Activated CD8-positive, alpha-beta T cell treated with anti-CD3 and anti-CD28 coated beads for 36 hours (primary cell): ENCODE measurements at regions of chr5 and their contacts with region 1.

Region 1: GRCh38 chr5:14644623-14645237 is 19.8 kb upstream of the OTULIN start:
- DNase-seq: no peak
- ATAC-seq: no peak
- H3K4me3 Mint-ChIP-seq: no peak overlapping the region
- H3K27ac Mint-ChIP-seq: no peak overlapping the region
- H3K4me1 Mint-ChIP-seq: no peaks in the 10 kb centered on the region
- H3K27me3 Mint-ChIP-seq: peaks cover 14% of the 10 kb centered on the region
- CTCF ChIP-seq: no peak

Region 2: DNA sequence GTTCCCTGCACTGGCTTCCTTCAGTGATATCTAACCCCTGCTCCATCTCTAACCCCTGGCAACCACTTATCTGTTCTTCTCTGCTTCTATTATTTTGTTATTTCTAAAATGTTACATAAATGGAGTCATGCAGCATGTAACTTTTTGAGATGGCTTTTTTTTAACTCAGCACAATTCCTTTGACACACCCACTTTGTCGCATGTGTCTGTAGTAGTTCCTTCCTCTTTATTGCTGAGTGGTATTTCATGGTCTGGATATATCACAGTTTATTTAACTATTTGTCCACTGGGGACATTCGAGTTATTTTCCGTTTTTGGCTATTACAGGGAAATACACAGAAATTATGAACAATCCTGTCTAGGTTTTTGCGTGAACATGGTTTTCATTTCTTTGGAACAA is 301.4 kb before region 1 on chr5:
- CTCF ChIA-PET with region 1: interaction called, 17 read pairs
- POLR2A ChIA-PET with region 1: no interaction called
- intact Hi-C with region 1: no loop called
- DNase-seq: no peak
- ATAC-seq: no peak
- H3K4me3 Mint-ChIP-seq: no peak overlapping the region
- H3K27ac Mint-ChIP-seq: no peak overlapping the region
- H3K4me1 Mint-ChIP-seq: peaks cover 3% of the 10 kb centered on the region
- H3K27me3 Mint-ChIP-seq: peaks cover 2% of the 10 kb centered on the region
- CTCF ChIP-seq: no peak

Region 3: GRCh38 chr5:14357851-14358250 is 286.9 kb before region 1 on chr5:
- CTCF ChIA-PET with region 1: interaction called, 172 read pairs
- POLR2A ChIA-PET with region 1: interaction called, 3 read pairs
- intact Hi-C with region 1: no loop called
- DNase-seq: no peak
- ATAC-seq: no peak
- H3K4me3 Mint-ChIP-seq: no peak overlapping the region
- H3K27ac Mint-ChIP-seq: no peak overlapping the region
- H3K4me1 Mint-ChIP-seq: no peaks in the 10 kb centered on the region
- H3K27me3 Mint-ChIP-seq: peaks cover 1% of the 10 kb centered on the region
- CTCF ChIP-seq: no peak

Region 4: GRCh38 chr5:14383923-14384322 is 260.8 kb before region 1 on chr5:
- CTCF ChIA-PET with region 1: interaction called, 22 read pairs
- POLR2A ChIA-PET with region 1: no interaction called
- intact Hi-C with region 1: no loop called
- DNase-seq: no peak
- ATAC-seq: no peak
- H3K4me3 Mint-ChIP-seq: no peak overlapping the region
- H3K27ac Mint-ChIP-seq: no peak overlapping the region
- H3K4me1 Mint-ChIP-seq: peaks cover 9% of the 10 kb centered on the region
- H3K27me3 Mint-ChIP-seq: no peaks in the 10 kb centered on the region
- CTCF ChIP-seq: no peak

Region 5: GRCh38 chr5:14415024-14415697 is 229.6 kb before region 1 on chr5:
- CTCF ChIA-PET with region 1: interaction called, 27 read pairs
- POLR2A ChIA-PET with region 1: no interaction called
- intact Hi-C with region 1: loop called (anchors 5 kb)
- DNase-seq: peak; percentile 85
- ATAC-seq: peak; percentile 58
- H3K4me3 Mint-ChIP-seq: peak overlapping the region; percentile 67
- H3K27ac Mint-ChIP-seq: peak overlapping the region; percentile 98
- H3K4me1 Mint-ChIP-seq: peaks cover 57% of the 10 kb centered on the region
- H3K27me3 Mint-ChIP-seq: no peaks in the 10 kb centered on the region
- CTCF ChIP-seq: no peak

Region 6: DNA sequence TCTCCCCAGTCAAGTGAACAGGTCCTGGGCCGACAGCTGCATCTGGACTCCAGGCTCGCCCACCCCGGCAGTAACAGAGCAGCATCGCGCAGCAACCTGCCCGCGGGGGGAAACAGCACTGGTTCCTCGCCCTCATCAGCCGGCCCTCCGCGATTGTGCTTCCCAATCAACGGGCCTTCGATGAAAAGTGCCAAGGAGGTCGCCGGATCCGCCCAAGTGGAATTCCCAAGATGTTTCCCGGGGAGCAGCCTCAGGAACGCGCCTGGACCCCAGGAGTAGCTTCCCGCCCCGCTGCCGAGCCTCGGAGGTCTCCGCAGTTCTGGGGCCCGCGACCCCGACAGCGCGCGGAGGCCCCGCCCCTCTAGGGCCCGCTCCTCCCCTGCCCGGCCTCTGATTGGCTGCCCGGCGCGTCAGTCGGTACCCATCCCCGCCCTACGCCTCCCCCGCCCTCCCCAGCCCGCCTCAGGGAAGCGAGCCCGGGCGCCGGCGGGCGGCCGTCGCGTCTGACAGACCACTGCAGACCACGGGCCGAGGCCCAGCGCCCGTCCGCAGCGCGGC is 63.3 kb before region 1 on chr5 and contains the start of gene OTULINL:
- CTCF ChIA-PET with region 1: interaction called, 32 read pairs
- POLR2A ChIA-PET with region 1: interaction called, 3 read pairs
- intact Hi-C with region 1: no loop called
- DNase-seq: peak; percentile 90
- ATAC-seq: peak; percentile 96
- H3K4me3 Mint-ChIP-seq: peak within 1 kb of the TSS; percentile 79
- H3K27ac Mint-ChIP-seq: peak within 1 kb of the TSS; percentile 75
- H3K4me1 Mint-ChIP-seq: peaks cover 41% of the 10 kb centered on the region
- H3K27me3 Mint-ChIP-seq: peaks cover 10% of the 10 kb centered on the region
- CTCF ChIP-seq: no peak
- total RNA-seq, gene OTULINL: 19.7 to 21.1 TPM

Region 7: DNA sequence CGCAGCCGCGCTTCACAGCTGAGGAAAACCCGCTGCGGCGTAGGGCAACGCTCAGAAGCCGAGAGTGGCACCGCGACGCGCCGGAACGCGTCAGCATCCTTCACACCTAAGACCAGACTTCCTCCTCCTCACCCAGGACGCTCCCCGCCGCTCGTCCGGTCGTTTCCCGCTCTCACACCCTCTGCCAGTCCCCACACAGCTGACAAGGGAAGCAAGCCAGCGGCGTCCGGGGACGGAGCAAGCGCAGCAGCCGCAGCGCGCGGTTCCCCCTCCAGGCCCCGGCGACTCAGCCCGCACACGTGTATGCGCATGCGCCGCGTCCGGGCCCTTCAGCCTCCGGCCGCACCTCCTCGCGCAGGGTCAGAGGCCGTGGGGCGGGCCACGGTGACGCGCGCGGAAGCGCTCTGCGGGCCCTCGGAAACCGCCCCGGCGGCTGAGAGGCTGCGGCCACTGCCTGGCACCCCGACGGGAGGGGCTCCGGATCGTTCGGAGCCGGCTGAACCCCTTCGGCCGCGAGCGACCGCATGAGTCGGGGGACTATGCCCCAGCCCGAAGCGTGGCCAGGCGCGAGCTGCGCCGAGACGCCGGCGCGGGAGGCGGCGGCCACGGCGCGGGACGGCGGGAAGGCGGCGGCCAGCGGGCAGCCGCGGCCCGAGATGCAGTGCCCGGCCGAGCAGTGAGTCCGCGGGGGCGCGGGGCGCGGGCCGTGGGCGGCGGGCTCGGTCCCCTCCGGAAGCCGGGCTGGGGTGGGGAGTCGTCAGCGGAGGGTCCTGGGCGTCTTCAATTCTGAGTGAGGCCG is 19.8 kb after region 1 on chr5 and contains the start of gene OTULIN:
- CTCF ChIA-PET with region 1: interaction called, 49 read pairs
- POLR2A ChIA-PET with region 1: interaction called, 3 read pairs
- intact Hi-C with region 1: no loop called
- DNase-seq: peak; percentile 92
- ATAC-seq: peak; percentile 76
- H3K4me3 Mint-ChIP-seq: peak within 1 kb of the TSS; percentile 96
- H3K27ac Mint-ChIP-seq: peak within 1 kb of the TSS; percentile 94
- H3K4me1 Mint-ChIP-seq: peaks cover 61% of the 10 kb centered on the region
- H3K27me3 Mint-ChIP-seq: no peaks in the 10 kb centered on the region
- CTCF ChIP-seq: no peak
- total RNA-seq, gene OTULIN: 59.6 to 60.5 TPM